ENCODE measurements at regions of chr12 and their contacts with region 1.

Region 1: DNA sequence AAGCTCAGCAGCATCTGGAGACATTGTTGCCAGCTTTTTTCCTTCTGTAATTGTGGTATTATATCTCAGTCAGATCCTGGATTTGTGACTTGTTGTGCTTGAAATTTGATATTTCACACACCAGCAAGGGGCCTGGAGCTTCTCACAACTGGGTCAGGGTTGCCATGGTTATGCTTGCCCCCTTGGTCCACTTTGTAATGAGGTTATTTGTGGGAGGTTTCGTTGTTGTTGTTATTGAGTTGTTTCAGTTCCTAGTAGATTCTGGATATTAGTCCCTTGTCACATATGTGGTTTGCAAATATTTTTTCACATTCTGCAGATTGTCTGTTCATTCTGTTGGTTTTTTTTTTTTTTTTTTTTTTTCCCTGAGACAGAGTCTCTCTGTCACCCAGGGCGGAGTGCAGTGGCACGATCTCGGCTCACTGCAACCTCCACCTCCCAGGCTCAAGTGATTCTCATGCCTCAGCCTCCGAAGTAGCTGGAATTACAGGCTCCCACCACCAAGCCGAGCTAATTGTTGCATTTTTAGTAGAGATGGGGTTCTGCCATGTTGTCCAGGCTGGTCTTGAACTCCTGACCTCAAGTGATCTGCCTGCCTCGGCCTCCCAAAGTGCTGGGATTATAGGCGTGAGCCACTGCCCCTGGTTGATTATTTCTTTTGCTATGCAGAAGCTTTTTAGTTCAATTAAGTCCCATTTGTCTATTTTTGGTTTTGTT is 80.6 kb upstream of the ETV6 start:
- DNase-seq: peak; percentile 96
- ATAC-seq: peak; percentile 77
- H3K4me3 ChIP-seq: peak overlapping the region; percentile 48
- H3K27ac ChIP-seq: peak overlapping the region; percentile 98
- H3K4me1 ChIP-seq: peaks cover 46% of the 10 kb centered on the region
- H3K27me3 ChIP-seq: no peaks in the 10 kb centered on the region
- CTCF ChIP-seq: no peak
- EP300 ChIP-seq: peak; percentile 99
- POLR2A ChIP-seq: no peak
- RAD21 ChIP-seq: no peak

Region 2: GRCh38 chr12:11446372-11446771 is 122.5 kb before region 1 on chr12:
- CTCF ChIA-PET with region 1: no interaction called
- POLR2A ChIA-PET with region 1: no interaction called
- RAD21 ChIA-PET with region 1: no interaction called
- SMC1A ChIA-PET with region 1: no interaction called
- in situ Hi-C with region 1: no loop called
- intact Hi-C with region 1: no loop called
- DNase-seq: no peak
- ATAC-seq: no peak
- H3K4me3 ChIP-seq: no peak overlapping the region
- H3K27ac ChIP-seq: no peak overlapping the region
- H3K4me1 ChIP-seq: no peaks in the 10 kb centered on the region
- H3K27me3 ChIP-seq: no peaks in the 10 kb centered on the region
- CTCF ChIP-seq: no peak
- EP300 ChIP-seq: no peak
- POLR2A ChIP-seq: no peak
- RAD21 ChIP-seq: no peak

Region 3: GRCh38 chr12:11545484-11546330 is 23.2 kb before region 1 on chr12:
- CTCF ChIA-PET with region 1: interaction called, 6 read pairs
- POLR2A ChIA-PET with region 1: interaction called, 13 read pairs
- RAD21 ChIA-PET with region 1: interaction called, 24 read pairs
- SMC1A ChIA-PET with region 1: interaction called, 35 read pairs
- in situ Hi-C with region 1: no loop called
- intact Hi-C with region 1: loop called (anchors 1 kb)
- DNase-seq: peak; percentile 78
- ATAC-seq: peak; percentile 90
- H3K4me3 ChIP-seq: peak overlapping the region; percentile 31; the same call in 1 of the 2 replicates
- H3K27ac ChIP-seq: peak overlapping the region; percentile 94
- H3K4me1 ChIP-seq: peaks cover 27% of the 10 kb centered on the region
- H3K27me3 ChIP-seq: no peaks in the 10 kb centered on the region
- CTCF ChIP-seq: peak in 2 of 3 experiments; percentile 39 to 44; a peak in 2 of 6 replicates
- EP300 ChIP-seq: 0 out of 4 replicates have a peak, but pooled peaks of 1 of the 2 experiments have one; percentile 30
- POLR2A ChIP-seq: peak; percentile 65
- RAD21 ChIP-seq: no peak

Region 4: DNA sequence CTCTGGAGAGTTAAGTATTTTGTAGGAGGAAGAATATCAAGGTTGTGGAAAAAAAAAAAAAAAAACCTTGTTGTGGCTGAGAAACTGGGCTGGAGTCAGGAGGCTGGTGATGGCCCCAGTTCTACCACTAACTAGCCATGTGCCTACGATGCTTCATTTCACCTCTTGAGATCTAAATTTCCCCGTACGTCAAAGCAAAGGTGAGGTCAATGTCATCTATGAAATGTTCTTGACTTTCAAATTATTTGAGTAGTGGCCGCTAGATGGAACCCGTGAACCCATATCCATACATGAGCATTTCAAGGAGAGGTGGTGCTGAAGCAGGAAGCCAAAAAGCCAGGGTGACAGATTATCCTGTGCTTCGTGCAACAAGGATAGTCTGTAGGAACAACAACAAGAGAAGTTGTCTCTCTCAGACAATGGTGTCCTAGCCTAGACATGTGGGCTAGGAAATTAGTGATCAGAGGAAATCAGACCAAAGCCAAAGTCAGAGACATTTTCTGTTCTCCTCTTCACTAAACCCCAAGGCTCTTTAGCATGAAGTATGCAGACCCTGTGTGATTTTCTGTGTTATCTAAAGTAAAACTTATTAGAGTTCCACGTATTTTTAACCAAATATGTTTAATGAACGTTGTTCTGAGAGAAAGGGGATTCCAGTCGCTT is 14.9 kb before region 1 on chr12:
- CTCF ChIA-PET with region 1: interaction called, 20 read pairs
- POLR2A ChIA-PET with region 1: interaction called, 28 read pairs
- RAD21 ChIA-PET with region 1: interaction called, 54 read pairs
- SMC1A ChIA-PET with region 1: interaction called, 63 read pairs
- in situ Hi-C with region 1: no loop called
- intact Hi-C with region 1: loop called (anchors 1 kb)
- DNase-seq: peak; percentile 88
- ATAC-seq: peak; percentile 87
- H3K4me3 ChIP-seq: no peak overlapping the region
- H3K27ac ChIP-seq: peak overlapping the region; percentile 70
- H3K4me1 ChIP-seq: peaks cover 4% of the 10 kb centered on the region; the same call in 1 of the 2 replicates
- H3K27me3 ChIP-seq: no peaks in the 10 kb centered on the region
- CTCF ChIP-seq: peak; percentile 61 to 77 (median 63)
- EP300 ChIP-seq: peak; percentile 45 to 58; a peak in 2 of 4 replicates
- POLR2A ChIP-seq: no peak
- RAD21 ChIP-seq: peak; percentile 88

Region 5: GRCh38 chr12:11648831-11649702 is 80.1 kb after region 1 on chr12 and contains the start of gene ETV6:
- CTCF ChIA-PET with region 1: no interaction called
- POLR2A ChIA-PET with region 1: interaction called, 3 read pairs
- RAD21 ChIA-PET with region 1: interaction called, 5 read pairs
- SMC1A ChIA-PET with region 1: interaction called, 3 read pairs
- in situ Hi-C with region 1: no loop called
- intact Hi-C with region 1: loop called (anchors 2 kb)
- DNase-seq: peak; percentile 86
- ATAC-seq: peak; percentile 31
- H3K4me3 ChIP-seq: peak within 1 kb of the TSS; percentile 85
- H3K27ac ChIP-seq: peak within 1 kb of the TSS; percentile 99
- H3K4me1 ChIP-seq: peaks cover 3% of the 10 kb centered on the region; the same call in 1 of the 2 replicates
- H3K27me3 ChIP-seq: no peaks in the 10 kb centered on the region
- CTCF ChIP-seq: no peak
- EP300 ChIP-seq: peak; percentile 33 to 46; a peak in 3 of 4 replicates
- POLR2A ChIP-seq: peak; percentile 80
- RAD21 ChIP-seq: no peak; the same call in 1 of the 2 replicates
- polyA plus RNA-seq, gene ETV6: 6.6 to 10.4 TPM

Region 6: GRCh38 chr12:11981121-11981733 is 412.3 kb after region 1 on chr12:
- CTCF ChIA-PET with region 1: no interaction called
- POLR2A ChIA-PET with region 1: no interaction called
- RAD21 ChIA-PET with region 1: interaction called, 3 read pairs
- SMC1A ChIA-PET with region 1: no interaction called
- in situ Hi-C with region 1: no loop called
- intact Hi-C with region 1: loop called (anchors 5 kb)
- DNase-seq: peak; percentile 98
- ATAC-seq: peak; percentile 90
- H3K4me3 ChIP-seq: peak overlapping the region; percentile 19; the same call in 1 of the 2 replicates
- H3K27ac ChIP-seq: peak overlapping the region; percentile 96
- H3K4me1 ChIP-seq: peaks cover 23% of the 10 kb centered on the region
- H3K27me3 ChIP-seq: no peaks in the 10 kb centered on the region
- CTCF ChIP-seq: no peak
- EP300 ChIP-seq: peak; percentile 99
- POLR2A ChIP-seq: no peak
- RAD21 ChIP-seq: peak; percentile 26; the same call in 1 of the 2 replicates

Region 7: DNA sequence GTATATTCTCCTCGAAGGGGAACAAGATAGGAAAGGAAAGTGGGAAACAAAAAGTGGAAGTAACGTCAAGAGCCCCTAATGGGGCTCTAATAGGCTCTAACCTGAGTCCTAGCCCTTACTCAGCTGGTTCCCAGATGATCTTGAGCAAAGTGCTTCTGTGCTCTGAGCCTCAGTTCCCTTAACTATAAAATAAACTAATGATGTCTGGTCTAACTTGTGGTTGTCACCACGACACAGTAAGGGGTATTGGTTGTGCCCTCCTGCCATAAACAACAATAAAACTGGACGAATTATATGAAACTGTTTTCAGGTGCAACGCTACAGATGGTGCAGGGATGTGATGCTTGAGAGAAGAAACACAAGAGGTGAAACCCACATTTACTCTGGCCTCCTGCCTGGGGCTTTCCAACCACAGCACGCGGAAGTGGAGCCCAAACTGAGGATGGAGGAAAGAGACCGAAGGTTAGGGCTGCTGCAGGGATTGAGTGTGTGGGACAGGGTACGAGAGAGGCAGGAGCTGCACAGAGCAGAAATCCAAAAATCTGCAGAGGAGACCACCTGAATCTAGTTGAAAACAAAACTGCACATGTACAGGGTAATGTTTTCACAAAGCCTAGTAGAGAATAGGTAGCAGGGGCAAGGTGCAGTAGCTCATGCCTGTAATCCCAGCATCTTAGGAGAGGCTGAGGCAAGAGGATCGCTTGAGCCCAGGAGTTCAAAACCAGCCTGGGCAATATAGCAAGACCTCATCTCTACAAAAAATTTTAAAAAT is 456.2 kb after region 1 on chr12:
- CTCF ChIA-PET with region 1: no interaction called
- POLR2A ChIA-PET with region 1: interaction called, 3 read pairs
- RAD21 ChIA-PET with region 1: interaction called, 3 read pairs
- SMC1A ChIA-PET with region 1: no interaction called
- in situ Hi-C with region 1: loop called (anchors 10 kb)
- intact Hi-C with region 1: no loop called
- DNase-seq: peak; percentile 93
- ATAC-seq: peak; percentile 83
- H3K4me3 ChIP-seq: peak overlapping the region; percentile 4
- H3K27ac ChIP-seq: peak overlapping the region; percentile 74
- H3K4me1 ChIP-seq: peaks cover 40% of the 10 kb centered on the region
- H3K27me3 ChIP-seq: no peaks in the 10 kb centered on the region
- CTCF ChIP-seq: no peak
- EP300 ChIP-seq: peak; percentile 92 to 94
- POLR2A ChIP-seq: no peak
- RAD21 ChIP-seq: no peak

Region 8: DNA sequence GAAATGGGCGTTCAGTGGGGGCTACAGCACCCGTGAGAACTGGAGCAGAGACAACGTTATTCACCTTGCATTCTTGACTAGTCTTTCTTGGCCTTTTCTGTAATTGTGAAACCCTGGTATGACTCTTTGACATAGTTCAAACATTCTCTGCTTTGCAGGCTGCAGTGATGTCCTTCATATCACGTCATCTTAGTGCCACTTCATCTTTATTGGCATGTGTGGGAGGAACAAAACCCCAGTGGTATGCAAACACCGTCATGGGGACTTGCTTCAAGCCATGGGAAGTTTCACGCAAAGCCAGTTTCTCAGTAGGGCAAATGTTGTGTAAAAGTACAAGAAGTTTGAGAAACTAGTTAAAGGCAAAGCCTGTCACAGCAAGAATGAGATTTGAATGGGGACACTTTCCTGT is 1014.0 kb after region 1 on chr12:
- CTCF ChIA-PET with region 1: no interaction called
- POLR2A ChIA-PET with region 1: no interaction called
- RAD21 ChIA-PET with region 1: no interaction called
- SMC1A ChIA-PET with region 1: no interaction called
- in situ Hi-C with region 1: loop called (anchors 25 kb)
- intact Hi-C with region 1: loop called (anchors 1 kb)
- DNase-seq: peak; percentile 100
- ATAC-seq: peak; percentile 92
- H3K4me3 ChIP-seq: no peak overlapping the region
- H3K27ac ChIP-seq: peak overlapping the region; percentile 94
- H3K4me1 ChIP-seq: peaks cover 44% of the 10 kb centered on the region
- H3K27me3 ChIP-seq: no peaks in the 10 kb centered on the region
- CTCF ChIP-seq: no peak
- EP300 ChIP-seq: peak; percentile 96 to 99
- POLR2A ChIP-seq: peak; percentile 36; the same call in 1 of the 2 replicates
- RAD21 ChIP-seq: 0 out of 2 replicates have a peak, but pooled peaks have one; percentile 17

Measured in GM12878 (cell line).